Activated CD4-positive, alpha-beta T cell treated with anti-CD3 and anti-CD28 coated beads, Interleukin-2, amount 10 ng/mL, durations not matched to agents 24 days and 14 days (primary cell): ENCODE measurements at regions of chr22 and their contacts with region 1.

Region 1: GRCh38 chr22:25623310-25623734 is 58.8 kb downstream of the GRK3 start:
- DNase-seq: peak; percentile 63
- H3K4me3 Mint-ChIP-seq: no peak overlapping the region
- H3K27ac Mint-ChIP-seq: peak overlapping the region; percentile 25
- H3K4me1 Mint-ChIP-seq: peaks cover 47% of the 10 kb centered on the region
- H3K27me3 Mint-ChIP-seq: no peaks in the 10 kb centered on the region

Region 2: DNA sequence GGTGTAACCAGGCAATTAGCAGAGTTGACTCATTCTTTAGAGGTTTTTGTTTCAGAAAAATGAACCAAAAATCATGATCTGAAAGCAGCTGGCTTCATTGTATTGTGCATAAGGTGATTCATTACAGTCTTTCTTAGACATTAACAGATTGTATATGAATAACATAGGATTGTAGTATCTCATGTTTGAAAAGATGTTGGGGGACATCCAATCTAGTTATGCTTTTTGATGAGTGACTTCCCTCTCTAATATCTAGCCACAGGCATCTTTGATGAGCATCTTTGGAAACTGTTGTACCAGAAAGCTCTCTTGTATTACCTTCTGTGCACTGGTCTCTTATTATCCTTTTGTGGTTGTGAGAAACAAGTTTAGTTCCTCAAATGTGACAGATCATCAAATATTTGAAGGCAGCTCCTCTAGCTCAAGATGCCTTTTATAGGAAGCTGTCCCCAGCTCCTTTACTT is 50.6 kb before region 1 on chr22:
- intact Hi-C with region 1: loop called (anchors 2 kb)
- DNase-seq: no peak
- H3K4me3 Mint-ChIP-seq: peak overlapping the region; percentile 8
- H3K27ac Mint-ChIP-seq: peak overlapping the region; percentile 45
- H3K4me1 Mint-ChIP-seq: peaks cover 46% of the 10 kb centered on the region
- H3K27me3 Mint-ChIP-seq: no peaks in the 10 kb centered on the region

Region 3: DNA sequence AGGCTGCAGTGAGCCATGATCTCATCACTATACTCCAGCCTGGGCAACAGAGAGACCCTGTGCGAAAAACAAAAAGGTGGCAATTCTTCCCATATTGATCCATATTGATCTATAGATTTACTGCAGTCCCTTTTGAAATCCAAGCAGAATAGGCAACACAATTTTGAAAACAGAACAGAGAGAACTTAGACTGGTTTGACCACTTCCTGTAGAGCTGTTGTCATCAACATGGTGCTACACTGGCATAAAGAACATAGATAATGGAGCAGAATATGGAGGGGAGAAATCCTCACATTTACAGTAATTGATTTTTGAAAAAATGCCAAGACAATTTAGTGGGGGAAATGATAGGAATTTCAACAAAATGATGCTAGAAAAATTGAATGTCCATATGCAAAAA is 24.7 kb before region 1 on chr22:
- intact Hi-C with region 1: no loop called
- DNase-seq: no peak
- H3K4me3 Mint-ChIP-seq: no peak overlapping the region
- H3K27ac Mint-ChIP-seq: peak overlapping the region; percentile 42
- H3K4me1 Mint-ChIP-seq: peaks cover 21% of the 10 kb centered on the region
- H3K27me3 Mint-ChIP-seq: no peaks in the 10 kb centered on the region

Region 4: DNA sequence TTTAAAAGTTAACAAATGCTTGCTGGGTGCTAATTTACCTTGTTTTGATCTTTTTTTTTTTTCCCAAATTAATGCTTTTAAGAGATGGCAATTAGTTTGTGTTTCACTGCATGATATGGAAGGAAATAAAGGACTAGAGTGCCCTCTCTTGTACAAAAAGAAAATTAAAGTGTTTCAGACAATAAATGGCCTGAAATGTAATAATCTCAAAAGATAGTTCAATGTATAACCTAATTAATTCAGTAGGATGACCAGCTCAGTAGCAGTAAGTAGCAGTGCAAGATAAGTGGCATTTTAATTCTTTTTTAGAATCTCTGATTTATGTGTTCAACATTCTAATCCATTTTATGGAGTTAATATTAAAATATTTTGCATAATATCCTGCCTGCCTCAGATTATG is 78.7 kb after region 1 on chr22:
- intact Hi-C with region 1: no loop called
- DNase-seq: no peak
- H3K4me3 Mint-ChIP-seq: peak overlapping the region; percentile 69
- H3K27ac Mint-ChIP-seq: peak overlapping the region; percentile 61
- H3K4me1 Mint-ChIP-seq: peaks cover 47% of the 10 kb centered on the region
- H3K27me3 Mint-ChIP-seq: no peaks in the 10 kb centered on the region

Region 5: DNA sequence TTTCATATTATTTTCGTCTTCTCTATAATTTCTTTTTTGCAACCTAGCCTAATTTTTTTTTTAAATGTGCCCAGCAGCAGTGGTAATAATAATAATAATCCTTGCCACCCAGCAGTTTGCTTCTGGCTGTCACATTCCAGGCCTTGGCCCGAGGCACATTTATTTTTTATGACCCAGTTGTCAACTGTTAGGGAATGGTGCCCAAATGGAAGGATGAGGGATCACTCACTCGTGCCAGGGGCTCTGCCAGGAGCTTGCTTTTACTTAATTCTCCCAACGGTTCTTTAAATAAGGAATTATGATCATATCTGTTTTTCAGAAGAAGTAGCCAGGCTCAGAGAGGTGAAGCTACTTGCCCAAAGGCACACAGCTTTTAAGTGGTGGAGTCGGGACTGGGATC is 168.2 kb after region 1 on chr22:
- intact Hi-C with region 1: no loop called
- DNase-seq: no peak
- H3K4me3 Mint-ChIP-seq: no peak overlapping the region
- H3K27ac Mint-ChIP-seq: no peak overlapping the region
- H3K4me1 Mint-ChIP-seq: no peaks in the 10 kb centered on the region
- H3K27me3 Mint-ChIP-seq: peaks cover 8% of the 10 kb centered on the region